HEK293 (cell line): ENCODE measurements at regions of chr2 and their contacts with region 1.

Region 1: DNA sequence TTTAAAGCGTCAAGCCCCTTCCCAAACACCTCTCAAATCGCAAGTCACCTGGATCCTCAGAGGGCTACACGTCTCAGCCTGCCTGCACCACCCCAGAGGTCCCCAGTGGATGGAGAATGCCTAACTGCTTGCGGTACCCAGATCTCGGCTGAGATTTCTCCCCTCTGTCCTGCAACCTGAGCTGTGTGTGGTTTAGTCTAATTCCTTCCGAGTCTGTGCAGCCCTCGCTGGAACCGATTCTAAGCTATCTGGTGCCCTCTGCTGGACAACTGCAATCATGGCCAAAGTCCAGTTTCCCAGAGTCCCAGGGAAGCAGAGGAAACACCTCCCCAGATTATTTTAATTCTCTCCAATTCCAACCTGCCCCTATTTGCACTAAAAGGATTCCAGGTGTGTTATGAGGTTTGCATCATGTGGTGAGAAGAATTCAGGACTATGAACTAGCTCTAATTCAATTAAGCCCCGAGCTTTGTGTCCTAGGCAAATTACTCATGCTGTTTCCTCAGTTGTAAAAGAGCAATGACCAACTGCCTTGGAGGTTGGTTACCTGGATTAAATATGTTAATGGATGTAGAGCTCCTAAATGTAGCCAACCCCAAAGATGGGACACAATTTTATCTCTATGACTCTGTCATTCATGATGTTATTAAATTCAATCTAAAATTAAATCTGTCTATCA is 276.1 kb upstream of the NCKAP5 start:
- H3K4me3 ChIP-seq: no peak overlapping the region
- H3K27ac ChIP-seq: no peak overlapping the region
- H3K4me1 ChIP-seq: no peaks in the 10 kb centered on the region
- CTCF ChIP-seq: peak; percentile 80

Region 2: GRCh38 chr2:133266041-133266925 is 578.1 kb before region 1 on chr2:
- CTCF ChIA-PET with region 1: interaction called, 10 read pairs
- POLR2A ChIA-PET with region 1: no interaction called
- H3K4me3 ChIP-seq: peak overlapping the region; percentile 50
- H3K27ac ChIP-seq: peak overlapping the region; percentile 50; the same call in 1 of the 2 replicates
- H3K4me1 ChIP-seq: peaks cover 22% of the 10 kb centered on the region
- CTCF ChIP-seq: peak; percentile 89

Region 3: GRCh38 chr2:133421516-133422312 is 422.6 kb before region 1 on chr2:
- CTCF ChIA-PET with region 1: interaction called, 10 read pairs
- POLR2A ChIA-PET with region 1: no interaction called
- H3K4me3 ChIP-seq: no peak overlapping the region
- H3K27ac ChIP-seq: no peak overlapping the region
- H3K4me1 ChIP-seq: peaks cover 3% of the 10 kb centered on the region; the same call in 1 of the 2 replicates
- CTCF ChIP-seq: peak; percentile 53

Region 4: GRCh38 chr2:133561045-133561852 is 283.1 kb before region 1 on chr2:
- CTCF ChIA-PET with region 1: interaction called, 20 read pairs
- POLR2A ChIA-PET with region 1: no interaction called
- H3K4me3 ChIP-seq: no peak overlapping the region
- H3K27ac ChIP-seq: no peak overlapping the region
- H3K4me1 ChIP-seq: no peaks in the 10 kb centered on the region
- CTCF ChIP-seq: peak; percentile 59

Region 5: GRCh38 chr2:133571249-133571648 is 273.1 kb before region 1 on chr2:
- CTCF ChIA-PET with region 1: no interaction called
- POLR2A ChIA-PET with region 1: no interaction called
- H3K4me3 ChIP-seq: no peak overlapping the region
- H3K27ac ChIP-seq: no peak overlapping the region
- H3K4me1 ChIP-seq: peaks cover 6% of the 10 kb centered on the region
- CTCF ChIP-seq: no peak

Region 6: GRCh38 chr2:133768662-133769435 is 75.5 kb before region 1 on chr2:
- CTCF ChIA-PET with region 1: interaction called, 12 read pairs
- POLR2A ChIA-PET with region 1: no interaction called
- H3K4me3 ChIP-seq: no peak overlapping the region
- H3K27ac ChIP-seq: no peak overlapping the region
- H3K4me1 ChIP-seq: no peaks in the 10 kb centered on the region
- CTCF ChIP-seq: no peak

Region 7: GRCh38 chr2:133780099-133780839 is 64.1 kb before region 1 on chr2:
- CTCF ChIA-PET with region 1: interaction called, 20 read pairs
- POLR2A ChIA-PET with region 1: no interaction called
- H3K4me3 ChIP-seq: no peak overlapping the region
- H3K27ac ChIP-seq: no peak overlapping the region
- H3K4me1 ChIP-seq: peaks cover 9% of the 10 kb centered on the region
- CTCF ChIP-seq: peak; percentile 64

Region 8: GRCh38 chr2:133833746-133834145 is 10.6 kb before region 1 on chr2:
- CTCF ChIA-PET with region 1: interaction called, 30 read pairs
- POLR2A ChIA-PET with region 1: no interaction called
- H3K4me3 ChIP-seq: no peak overlapping the region
- H3K27ac ChIP-seq: no peak overlapping the region
- H3K4me1 ChIP-seq: no peaks in the 10 kb centered on the region
- CTCF ChIP-seq: no peak

Region 9: GRCh38 chr2:133900890-133901289 is 56.5 kb after region 1 on chr2:
- CTCF ChIA-PET with region 1: no interaction called
- POLR2A ChIA-PET with region 1: no interaction called
- H3K4me3 ChIP-seq: no peak overlapping the region
- H3K27ac ChIP-seq: no peak overlapping the region
- H3K4me1 ChIP-seq: no peaks in the 10 kb centered on the region
- CTCF ChIP-seq: no peak